ENCODE measurements at regions of chr3 and their contacts with region 1.

Region 1: GRCh38 chr3:78666470-78666800 is 1101.4 kb downstream of the ROBO1 start:
- DNase-seq: no peak
- H3K4me3 ChIP-seq: peak overlapping the region in 1 of 59 donors; percentile 6
- H3K27ac ChIP-seq: no peak overlapping the region
- H3K27me3 ChIP-seq: no peaks in the 10 kb centered on the region
- CTCF ChIP-seq: no peak

Region 2: DNA sequence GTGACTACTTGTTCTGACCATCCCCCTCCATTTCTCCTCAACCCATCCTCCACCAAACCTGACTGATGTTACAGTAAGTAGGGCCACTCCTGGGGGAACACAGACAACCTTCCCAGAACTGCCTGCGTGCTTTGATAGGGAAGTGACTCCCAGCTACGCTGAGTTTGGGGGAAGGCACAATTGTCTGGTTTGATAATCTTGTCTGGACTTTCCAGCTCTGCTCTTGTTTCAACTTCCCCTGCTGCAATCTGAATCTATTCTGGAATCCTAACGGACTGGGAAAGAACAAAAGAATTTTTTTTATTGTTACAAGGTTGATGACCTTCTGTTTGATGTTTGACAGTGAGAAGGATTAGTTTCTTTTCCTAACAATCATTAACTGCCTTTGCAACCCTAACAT is 205.8 kb after region 1 on chr3:
- intact Hi-C with region 1: loop called in 1 of 2 experiments (anchors 10 kb)
- DNase-seq: no peak
- H3K4me3 ChIP-seq: peak overlapping the region in 21 of 59 donors; percentile 0 to 52 (median 11)
- H3K27ac ChIP-seq: peak overlapping the region in 17 of 59 donors; percentile 3 to 75 (median 32)
- H3K27me3 ChIP-seq: no peaks in the 10 kb centered on the region
- CTCF ChIP-seq: no peak

Region 3: GRCh38 chr3:78887547-78888011 is 221.1 kb after region 1 on chr3:
- intact Hi-C with region 1: loop called in 1 of 2 experiments (anchors 10 kb)
- DNase-seq: no peak
- H3K4me3 ChIP-seq: peak overlapping the region in 17 of 59 donors; percentile 1 to 47 (median 17)
- H3K27ac ChIP-seq: peak overlapping the region in 20 of 59 donors; percentile 0 to 73 (median 38)
- H3K27me3 ChIP-seq: no peaks in the 10 kb centered on the region
- CTCF ChIP-seq: no peak

Region 4: DNA sequence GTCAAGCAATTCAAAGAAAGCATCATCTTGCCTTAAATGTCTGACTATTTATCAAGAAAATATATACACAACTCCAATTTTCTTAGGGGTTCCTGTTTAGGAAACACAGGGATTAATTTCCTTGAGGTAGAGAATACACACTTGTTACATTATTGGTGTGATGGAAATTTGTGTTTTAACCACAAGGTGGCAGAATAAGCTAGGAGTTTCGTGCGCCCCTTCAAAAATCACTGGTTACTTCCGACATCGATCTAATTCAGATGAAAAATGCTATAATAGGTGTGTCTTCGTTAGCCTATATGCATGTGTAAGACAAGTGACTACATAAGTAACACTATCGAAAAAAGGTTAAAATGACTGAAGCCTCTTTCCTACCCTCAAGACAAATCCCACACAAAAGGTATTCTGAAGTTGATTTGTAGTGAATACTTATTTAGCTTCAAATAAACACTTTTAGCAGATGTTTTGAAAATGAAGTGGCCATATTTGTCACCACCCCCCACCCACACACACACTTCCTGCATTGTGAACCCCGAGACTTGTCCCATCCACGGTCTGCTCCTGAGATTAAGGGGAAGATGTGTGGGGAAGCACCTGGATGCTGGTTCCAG is 854.9 kb after region 1 on chr3:
- intact Hi-C with region 1: loop called in 1 of 2 experiments (anchors 10 kb)
- DNase-seq: no peak
- H3K4me3 ChIP-seq: no peak overlapping the region
- H3K27ac ChIP-seq: no peak overlapping the region
- H3K27me3 ChIP-seq: peaks cover 0 to 13% (median 0%) of the 10 kb centered on the region in 45 donors
- CTCF ChIP-seq: peak; percentile 52 to 88 (median 75)

Measured in dorsolateral prefrontal cortex (tissue), 120 donors.